OCI-LY7 (cell line): ENCODE measurements at regions of chr3 and their contacts with region 1.

Region 1: DNA sequence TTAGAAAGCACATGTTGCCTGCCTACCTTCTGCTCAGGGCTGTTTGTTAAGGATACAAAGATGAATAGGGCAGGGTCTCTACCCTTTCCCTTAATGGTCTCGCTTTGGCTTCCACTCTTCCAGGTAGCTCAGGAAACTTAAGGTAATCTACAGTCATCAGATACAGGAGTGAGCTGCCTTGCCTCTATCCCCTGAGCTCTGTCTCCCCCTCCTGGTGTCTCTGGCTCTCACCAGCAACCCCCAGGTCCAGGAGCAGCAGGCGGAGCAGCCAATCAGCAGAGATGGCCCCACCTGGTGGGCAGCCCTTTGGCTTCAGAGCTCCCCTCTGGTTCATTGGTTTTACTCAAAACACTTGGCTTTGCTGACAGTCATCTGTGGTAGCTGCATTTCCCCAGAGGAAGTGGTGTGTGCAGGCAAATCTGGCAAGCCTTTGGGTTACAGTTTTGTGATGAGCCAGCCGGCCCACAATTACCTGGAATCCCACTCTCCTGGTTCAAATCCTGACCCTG is 8.5 kb upstream of the CX3CR1 start:
- DNase-seq: peak; percentile 98
- H3K4me3 ChIP-seq: peak overlapping the region; percentile 31
- H3K27ac ChIP-seq: peak overlapping the region; percentile 61
- H3K4me1 ChIP-seq: peaks cover 37% of the 10 kb centered on the region
- CTCF ChIP-seq: peak; percentile 99

Region 2: DNA sequence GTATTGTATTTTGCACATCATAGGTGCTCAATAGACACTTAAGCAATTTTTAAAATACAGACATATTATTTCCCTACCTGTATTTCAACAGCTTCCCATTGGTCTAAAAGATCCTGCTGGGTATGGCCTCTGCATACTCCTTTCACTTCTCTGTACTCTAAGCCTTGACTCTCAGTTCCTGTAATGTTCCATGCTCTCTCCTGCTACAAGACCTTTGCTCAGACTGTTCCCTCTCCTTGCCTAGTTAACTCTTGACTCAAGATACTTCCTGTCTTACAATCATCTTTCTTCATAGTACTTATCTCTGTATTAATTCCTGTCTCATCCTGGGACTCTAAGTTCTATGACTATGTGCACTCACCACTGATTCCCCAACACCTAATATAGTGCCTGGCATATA is 238.3 kb before region 1 on chr3:
- CTCF ChIA-PET with region 1: no interaction called
- POLR2A ChIA-PET with region 1: no interaction called
- intact Hi-C with region 1: no loop called
- DNase-seq: peak; percentile 17
- H3K4me3 ChIP-seq: no peak overlapping the region
- H3K27ac ChIP-seq: no peak overlapping the region
- H3K4me1 ChIP-seq: peaks cover 21% of the 10 kb centered on the region
- CTCF ChIP-seq: no peak

Region 3: DNA sequence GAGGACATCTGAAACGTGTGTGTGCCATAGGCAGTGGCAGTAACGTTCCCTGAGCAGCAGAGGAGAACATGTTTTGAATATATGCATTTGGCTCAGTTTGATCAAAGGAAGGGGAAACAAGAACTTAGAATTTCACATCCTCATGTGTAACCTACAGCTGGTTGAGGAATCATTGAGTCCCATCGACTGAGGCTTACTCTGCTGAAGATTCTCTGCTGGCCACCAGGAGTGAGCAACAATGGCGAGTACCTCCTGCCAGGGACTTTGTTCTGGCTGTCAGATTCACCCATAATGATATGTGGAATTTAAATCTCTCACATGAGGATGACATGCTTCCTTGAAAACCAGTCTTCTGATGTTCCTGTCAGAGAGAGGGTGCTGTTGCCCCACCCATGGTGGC is 202.2 kb before region 1 on chr3:
- CTCF ChIA-PET with region 1: interaction called, 5 read pairs
- POLR2A ChIA-PET with region 1: interaction called, 4 read pairs
- intact Hi-C with region 1: loop called (anchors 5 kb)
- DNase-seq: peak; percentile 91
- H3K4me3 ChIP-seq: peak overlapping the region; percentile 30
- H3K27ac ChIP-seq: peak overlapping the region; percentile 84
- H3K4me1 ChIP-seq: peaks cover 29% of the 10 kb centered on the region
- CTCF ChIP-seq: peak; percentile 64

Region 4: DNA sequence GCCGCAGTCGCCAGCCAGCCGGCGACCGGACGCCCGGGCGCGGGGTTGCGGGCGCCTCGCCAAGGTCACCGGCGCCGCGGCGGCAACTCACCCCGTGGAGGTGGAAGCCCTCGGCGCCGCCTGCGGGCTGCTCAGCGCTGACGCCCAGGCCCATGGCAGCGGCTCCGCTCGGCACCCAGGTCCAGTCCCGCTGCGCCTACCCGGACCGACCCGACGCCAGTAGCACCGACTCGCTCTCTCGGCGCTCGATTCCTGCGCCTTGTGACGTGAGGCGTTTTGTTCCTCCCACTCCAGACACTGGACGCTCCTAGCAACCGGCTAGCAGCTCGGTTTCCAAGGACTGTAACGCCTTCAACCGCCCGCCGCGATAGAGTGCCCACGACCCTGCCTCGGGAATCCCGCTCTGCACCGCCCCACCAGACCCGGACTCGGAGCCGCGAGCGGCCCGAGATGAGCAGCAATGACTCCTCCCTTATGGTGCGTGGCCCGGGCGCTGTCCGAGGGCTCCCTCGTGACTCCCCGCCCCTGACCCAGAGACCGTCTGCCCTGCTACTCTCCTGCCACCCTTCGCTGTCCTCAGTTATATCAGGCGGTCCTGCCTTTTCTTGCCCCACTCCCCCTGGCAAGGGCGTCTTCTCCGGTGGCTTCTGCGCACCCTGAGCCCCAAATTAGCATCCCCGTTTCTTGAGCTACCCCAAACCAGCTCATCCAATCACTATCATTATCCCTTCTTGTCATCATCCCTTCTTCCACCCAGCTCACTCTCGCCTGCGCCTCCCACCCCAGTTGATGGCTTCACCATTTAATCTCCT is 180.8 kb before region 1 on chr3 and contains the starts of genes GORASP1 and TTC21A:
- CTCF ChIA-PET with region 1: interaction called, 5 read pairs
- POLR2A ChIA-PET with region 1: interaction called, 6 read pairs
- intact Hi-C with region 1: loop called (anchors 1 kb)
- DNase-seq: peak; percentile 76
- H3K4me3 ChIP-seq: peak within 1 kb of the TSS; percentile 85
- H3K27ac ChIP-seq: peak within 1 kb of the TSS; percentile 97
- H3K4me1 ChIP-seq: peaks cover 61% of the 10 kb centered on the region
- CTCF ChIP-seq: 0 out of 2 replicates have a peak, but pooled peaks have one; percentile 13
- total RNA-seq, gene GORASP1: 44.8 and 59.9 TPM in 2 replicates
- total RNA-seq, gene TTC21A: 10.5 and 12.8 TPM in 2 replicates

Region 5: GRCh38 chr3:39189959-39190269 is 98.4 kb before region 1 on chr3:
- CTCF ChIA-PET with region 1: interaction called, 87 read pairs
- POLR2A ChIA-PET with region 1: interaction called, 49 read pairs
- intact Hi-C with region 1: loop called (anchors 1 kb)
- DNase-seq: peak; percentile 80
- H3K4me3 ChIP-seq: no peak overlapping the region
- H3K27ac ChIP-seq: no peak overlapping the region
- H3K4me1 ChIP-seq: peaks cover 8% of the 10 kb centered on the region
- CTCF ChIP-seq: peak; percentile 91

Region 6: GRCh38 chr3:39216176-39216790 is 72.1 kb before region 1 on chr3:
- CTCF ChIA-PET with region 1: interaction called, 3 read pairs
- POLR2A ChIA-PET with region 1: interaction called, 13 read pairs
- intact Hi-C with region 1: loop called (anchors 2 kb)
- DNase-seq: peak; percentile 81
- H3K4me3 ChIP-seq: peak overlapping the region; percentile 18
- H3K27ac ChIP-seq: peak overlapping the region; percentile 14
- H3K4me1 ChIP-seq: peaks cover 23% of the 10 kb centered on the region
- CTCF ChIP-seq: no peak

Region 7: DNA sequence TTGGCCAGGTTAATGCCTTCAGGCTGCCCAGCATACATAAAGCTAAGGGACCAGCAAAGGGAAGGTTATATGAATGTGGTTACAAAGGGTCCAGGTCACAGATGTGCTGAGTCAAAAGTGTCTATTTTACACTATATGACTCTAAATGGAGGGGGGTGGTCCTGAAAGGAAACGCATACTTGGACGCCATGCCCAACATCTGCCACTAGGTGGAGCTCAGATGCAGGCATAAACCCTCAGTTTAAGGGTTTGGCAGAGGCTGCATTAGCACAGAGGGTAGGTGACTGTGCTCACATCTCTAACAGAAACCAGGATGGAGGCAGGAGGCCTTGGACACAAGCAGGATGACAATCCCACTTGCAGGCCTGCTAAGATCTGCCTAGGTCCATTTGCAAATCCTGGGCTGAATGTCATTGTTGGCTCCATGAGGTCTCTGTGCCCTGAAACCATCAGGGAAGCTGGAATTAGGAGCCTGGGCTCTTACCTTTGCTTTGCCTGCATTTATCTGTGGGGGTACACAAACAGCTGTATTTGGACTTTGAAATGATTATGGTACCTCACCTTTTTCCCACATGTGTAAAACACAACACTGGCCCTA is 1292.2 kb after region 1 on chr3:
- CTCF ChIA-PET with region 1: no interaction called
- POLR2A ChIA-PET with region 1: no interaction called
- intact Hi-C with region 1: no loop called
- DNase-seq: peak; percentile 76
- H3K4me3 ChIP-seq: no peak overlapping the region
- H3K27ac ChIP-seq: no peak overlapping the region
- H3K4me1 ChIP-seq: no peaks in the 10 kb centered on the region
- CTCF ChIP-seq: peak; percentile 96